B cell (primary cell): ENCODE measurements at regions of chr3 and their contacts with region 1.

Region 1: GRCh38 chr3:188439080-188439479 is 285.1 kb downstream of the LPP start:
- DNase-seq: peak; percentile 88
- ATAC-seq: peak; percentile 90
- H3K4me3 ChIP-seq: peak overlapping the region in 1 of 5 experiments; percentile 27
- H3K4me3 Mint-ChIP-seq: peak overlapping the region; percentile 44
- H3K27ac ChIP-seq: peak overlapping the region; percentile 93 to 96
- H3K27ac Mint-ChIP-seq: peak overlapping the region; percentile 92
- H3K4me1 ChIP-seq: peaks cover 71 to 80% of the 10 kb centered on the region in 2 donors
- H3K4me1 Mint-ChIP-seq: peaks cover 82% of the 10 kb centered on the region
- H3K27me3 ChIP-seq: no peaks in the 10 kb centered on the region
- H3K27me3 Mint-ChIP-seq: no peaks in the 10 kb centered on the region
- CTCF ChIP-seq: no peak

Region 2: DNA sequence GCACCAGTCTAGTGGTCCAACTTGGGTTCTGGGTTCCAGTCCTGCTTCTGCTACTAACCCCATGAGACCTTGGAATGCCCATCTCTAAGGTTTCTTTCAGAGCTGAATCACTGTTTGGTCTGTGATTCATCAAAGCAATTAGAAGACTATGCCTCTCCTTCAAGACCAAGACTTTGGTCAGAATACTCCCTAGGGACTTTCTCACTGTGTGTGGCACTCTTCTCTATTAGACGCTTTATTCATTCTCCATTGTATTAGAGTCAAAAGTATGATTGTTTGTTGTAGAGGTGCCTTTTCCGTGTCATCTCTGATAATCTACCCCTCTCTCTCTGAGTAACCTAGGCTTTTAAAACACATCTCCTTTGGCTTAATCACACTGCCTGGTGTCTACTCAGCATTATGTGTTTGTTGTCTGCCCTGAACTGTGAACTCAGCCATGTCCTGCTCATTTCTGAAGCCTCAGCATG is 194.7 kb before region 1 on chr3:
- CTCF ChIA-PET with region 1: no interaction called
- POLR2A ChIA-PET with region 1: no interaction called
- intact Hi-C with region 1: loop called (anchors 5 kb)
- DNase-seq: peak; percentile 56
- ATAC-seq: peak; percentile 64
- H3K4me3 ChIP-seq: no peak overlapping the region
- H3K4me3 Mint-ChIP-seq: peak overlapping the region; percentile 42
- H3K27ac ChIP-seq: peak overlapping the region; percentile 43 to 79
- H3K27ac Mint-ChIP-seq: peak overlapping the region; percentile 60
- H3K4me1 ChIP-seq: peaks cover 53 to 54% of the 10 kb centered on the region in 2 donors
- H3K4me1 Mint-ChIP-seq: peaks cover 70% of the 10 kb centered on the region
- H3K27me3 ChIP-seq: no peaks in the 10 kb centered on the region
- H3K27me3 Mint-ChIP-seq: no peaks in the 10 kb centered on the region
- CTCF ChIP-seq: no peak

Region 3: DNA sequence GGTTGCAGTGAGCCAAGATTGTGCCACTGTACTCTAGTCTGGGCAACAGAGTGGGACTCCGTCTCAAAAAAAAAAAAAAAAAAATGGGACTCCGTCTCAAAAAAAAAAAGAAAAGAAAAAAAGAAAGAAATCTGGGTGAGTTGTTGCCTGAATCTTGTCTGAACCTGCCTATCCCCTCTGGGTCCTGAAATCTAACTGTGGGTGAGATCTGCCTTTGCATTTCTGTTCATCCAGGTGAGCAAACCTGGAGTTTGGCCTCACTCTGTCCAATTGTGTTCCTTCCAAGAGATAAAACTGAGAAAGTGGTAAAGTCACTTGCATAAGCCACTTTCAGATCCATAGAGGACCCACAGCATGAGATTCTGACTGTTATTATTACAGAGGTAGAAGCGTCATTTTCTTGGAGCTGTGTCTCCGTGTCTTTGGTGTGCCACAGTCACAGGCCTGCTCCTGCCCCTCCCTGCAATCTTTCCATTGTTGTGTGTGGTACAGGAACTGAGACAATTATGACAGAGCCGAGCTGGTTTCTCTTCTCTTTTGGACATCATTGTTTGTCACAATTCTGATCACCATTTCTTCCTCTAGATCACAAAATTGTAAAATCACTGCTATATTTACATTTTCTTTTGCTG is 49.3 kb before region 1 on chr3:
- CTCF ChIA-PET with region 1: interaction called, 3 read pairs
- POLR2A ChIA-PET with region 1: no interaction called
- intact Hi-C with region 1: loop called (anchors 1 kb)
- DNase-seq: peak; percentile 86
- ATAC-seq: peak; percentile 88
- H3K4me3 ChIP-seq: peak overlapping the region in 1 of 5 experiments; percentile 42
- H3K4me3 Mint-ChIP-seq: peak overlapping the region; percentile 82
- H3K27ac ChIP-seq: peak overlapping the region; percentile 94 to 96
- H3K27ac Mint-ChIP-seq: peak overlapping the region; percentile 99
- H3K4me1 ChIP-seq: peaks cover 55 to 75% of the 10 kb centered on the region in 2 donors
- H3K4me1 Mint-ChIP-seq: peaks cover 80% of the 10 kb centered on the region
- H3K27me3 ChIP-seq: no peaks in the 10 kb centered on the region
- H3K27me3 Mint-ChIP-seq: no peaks in the 10 kb centered on the region
- CTCF ChIP-seq: no peak

Region 4: DNA sequence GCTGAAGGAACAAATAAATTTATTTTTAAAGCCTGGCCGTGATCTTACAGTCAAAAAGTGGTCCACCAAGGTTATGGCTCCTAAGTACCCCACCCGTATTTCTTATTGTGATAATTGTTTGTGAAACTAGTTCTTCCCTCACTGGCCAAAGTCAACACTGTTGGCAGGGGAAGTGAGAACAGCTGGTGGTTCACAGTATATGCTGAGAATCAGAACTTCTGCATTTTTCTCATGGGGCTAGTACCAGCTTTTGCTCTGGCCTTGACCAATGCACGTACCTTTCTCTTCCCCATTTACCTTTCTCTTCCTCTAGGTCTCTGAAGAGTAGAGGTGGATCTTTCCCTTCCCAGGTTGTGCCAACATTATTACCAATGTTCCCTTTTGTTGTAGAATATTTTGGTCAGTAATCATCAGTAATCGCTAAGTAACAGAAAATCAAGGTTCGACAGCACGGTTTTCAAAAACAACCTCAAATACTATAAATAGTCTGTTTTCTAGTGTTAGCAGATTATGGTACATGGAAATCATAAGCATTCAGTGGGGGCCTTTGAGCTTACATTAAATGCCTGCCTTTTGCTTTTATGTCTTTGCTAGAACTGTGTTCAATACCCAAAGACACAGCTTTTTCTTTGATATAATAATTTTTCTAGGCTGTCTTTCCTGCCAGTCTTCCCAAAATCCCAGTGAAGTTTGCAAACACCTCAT is 17.1 kb before region 1 on chr3:
- CTCF ChIA-PET with region 1: interaction called, 12 read pairs
- POLR2A ChIA-PET with region 1: interaction called, 19 read pairs
- intact Hi-C with region 1: loop called (anchors 1 kb)
- DNase-seq: peak; percentile 89
- ATAC-seq: peak; percentile 95
- H3K4me3 ChIP-seq: peak overlapping the region in 1 of 5 experiments; percentile 47
- H3K4me3 Mint-ChIP-seq: peak overlapping the region; percentile 74
- H3K27ac ChIP-seq: peak overlapping the region; percentile 89 to 94
- H3K27ac Mint-ChIP-seq: peak overlapping the region; percentile 98
- H3K4me1 ChIP-seq: peaks cover 59 to 72% of the 10 kb centered on the region in 2 donors
- H3K4me1 Mint-ChIP-seq: peaks cover 90% of the 10 kb centered on the region
- H3K27me3 ChIP-seq: no peaks in the 10 kb centered on the region
- H3K27me3 Mint-ChIP-seq: no peaks in the 10 kb centered on the region
- CTCF ChIP-seq: no peak

Region 5: DNA sequence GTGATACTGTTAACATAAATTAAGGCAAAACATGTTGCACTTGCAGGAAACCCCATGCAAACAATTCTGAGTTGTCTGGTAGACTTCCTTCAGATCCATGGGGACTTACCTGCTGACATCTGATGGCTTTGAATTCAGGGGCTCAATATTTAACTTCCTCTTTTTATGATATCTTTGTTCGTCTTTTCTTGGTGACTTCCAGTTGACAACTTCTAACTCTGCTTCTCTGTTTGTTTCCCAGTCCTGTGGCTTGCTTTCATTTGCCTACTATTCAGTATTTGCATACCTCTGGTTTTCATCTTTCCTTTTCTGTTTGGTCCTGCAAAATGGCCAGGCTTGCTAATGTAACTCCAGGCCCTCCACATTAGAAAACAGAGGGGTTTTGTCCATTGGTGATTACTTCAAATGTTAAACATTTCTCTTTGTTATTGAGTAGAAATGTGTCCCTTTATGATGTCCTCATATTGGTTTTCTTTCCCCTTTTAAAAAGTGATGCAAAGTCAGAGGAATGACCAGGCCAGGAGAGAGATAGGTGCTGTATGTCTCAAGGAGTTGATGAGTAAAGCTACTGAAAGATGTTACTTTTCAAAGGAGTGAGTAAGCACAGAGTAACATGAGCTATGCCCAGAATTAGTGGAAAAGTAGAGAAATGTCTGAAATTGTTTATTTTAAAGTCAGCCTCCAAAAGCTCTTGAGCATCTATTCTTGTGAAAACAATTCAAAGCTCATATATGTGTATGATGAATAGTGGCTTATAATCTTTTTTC is 50.7 kb after region 1 on chr3:
- CTCF ChIA-PET with region 1: no interaction called
- POLR2A ChIA-PET with region 1: no interaction called
- intact Hi-C with region 1: loop called (anchors 1 kb)
- DNase-seq: peak; percentile 80
- ATAC-seq: peak; percentile 90
- H3K4me3 ChIP-seq: peak overlapping the region in 1 of 5 experiments; percentile 13
- H3K4me3 Mint-ChIP-seq: peak overlapping the region; percentile 32
- H3K27ac ChIP-seq: peak overlapping the region; percentile 61 to 85
- H3K27ac Mint-ChIP-seq: peak overlapping the region; percentile 81
- H3K4me1 ChIP-seq: peaks cover 32 to 33% of the 10 kb centered on the region in 2 donors
- H3K4me1 Mint-ChIP-seq: peaks cover 43% of the 10 kb centered on the region
- H3K27me3 ChIP-seq: no peaks in the 10 kb centered on the region
- H3K27me3 Mint-ChIP-seq: no peaks in the 10 kb centered on the region
- CTCF ChIP-seq: no peak

Region 6: DNA sequence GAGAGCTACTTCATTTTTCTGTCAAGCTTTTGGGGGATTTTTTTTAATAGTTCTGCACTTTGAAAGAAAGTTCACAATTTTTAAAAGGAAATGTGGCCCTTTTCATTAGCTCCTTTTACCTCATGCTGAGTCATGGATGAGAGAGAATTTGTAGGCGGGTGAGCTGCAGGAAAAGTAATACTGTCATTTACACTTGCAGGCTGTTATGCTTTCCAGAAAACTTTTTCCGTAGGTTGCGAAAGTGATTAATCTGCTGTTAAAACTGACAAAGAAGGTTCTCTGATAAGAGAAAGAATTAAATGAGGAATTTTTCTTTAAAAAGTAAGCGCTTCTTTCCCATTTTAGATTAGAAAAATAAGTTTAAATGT is 145.1 kb after region 1 on chr3:
- CTCF ChIA-PET with region 1: interaction called, 3 read pairs
- POLR2A ChIA-PET with region 1: no interaction called
- intact Hi-C with region 1: loop called (anchors 5 kb)
- DNase-seq: no peak
- ATAC-seq: no peak
- H3K4me3 ChIP-seq: peak overlapping the region in 1 of 5 experiments; percentile 13
- H3K4me3 Mint-ChIP-seq: no peak overlapping the region
- H3K27ac ChIP-seq: peak overlapping the region; percentile 6 to 73
- H3K27ac Mint-ChIP-seq: no peak overlapping the region
- H3K4me1 ChIP-seq: peaks cover 49 to 53% of the 10 kb centered on the region in 2 donors
- H3K4me1 Mint-ChIP-seq: peaks cover 32% of the 10 kb centered on the region
- H3K27me3 ChIP-seq: no peaks in the 10 kb centered on the region
- H3K27me3 Mint-ChIP-seq: no peaks in the 10 kb centered on the region
- CTCF ChIP-seq: no peak

Region 7: DNA sequence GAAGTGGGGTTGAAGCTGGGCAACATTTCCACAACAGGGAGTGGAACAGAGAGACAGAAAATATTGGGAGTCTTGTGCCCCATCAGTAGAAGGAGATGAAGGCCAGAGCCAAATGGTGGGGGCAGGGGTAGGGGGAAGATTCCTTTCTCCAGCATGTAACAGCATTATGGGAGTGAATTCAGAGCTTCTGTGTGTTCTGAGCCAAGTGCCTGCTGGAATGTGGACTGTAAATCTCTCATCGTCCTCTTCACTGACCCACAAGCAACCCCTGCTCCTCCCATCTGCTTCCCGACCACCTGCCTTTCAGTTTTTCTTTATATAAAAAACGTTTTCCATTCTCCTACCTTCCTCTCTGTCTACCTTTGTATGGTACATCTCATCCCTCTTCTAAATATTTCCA is 388.5 kb after region 1 on chr3:
- CTCF ChIA-PET with region 1: no interaction called
- POLR2A ChIA-PET with region 1: no interaction called
- intact Hi-C with region 1: no loop called
- DNase-seq: no peak
- ATAC-seq: no peak
- H3K4me3 ChIP-seq: no peak overlapping the region
- H3K4me3 Mint-ChIP-seq: no peak overlapping the region
- H3K27ac ChIP-seq: no peak overlapping the region
- H3K27ac Mint-ChIP-seq: no peak overlapping the region
- H3K4me1 ChIP-seq: no peaks in the 10 kb centered on the region
- H3K4me1 Mint-ChIP-seq: no peaks in the 10 kb centered on the region
- H3K27me3 ChIP-seq: no peaks in the 10 kb centered on the region
- H3K27me3 Mint-ChIP-seq: no peaks in the 10 kb centered on the region
- CTCF ChIP-seq: no peak